Activated CD4-positive, alpha-beta memory T cell treated with anti-CD3 and anti-CD28 coated beads for 36 hours (primary cell): ENCODE measurements at regions of chr13 and their contacts with region 1.

Region 1: DNA sequence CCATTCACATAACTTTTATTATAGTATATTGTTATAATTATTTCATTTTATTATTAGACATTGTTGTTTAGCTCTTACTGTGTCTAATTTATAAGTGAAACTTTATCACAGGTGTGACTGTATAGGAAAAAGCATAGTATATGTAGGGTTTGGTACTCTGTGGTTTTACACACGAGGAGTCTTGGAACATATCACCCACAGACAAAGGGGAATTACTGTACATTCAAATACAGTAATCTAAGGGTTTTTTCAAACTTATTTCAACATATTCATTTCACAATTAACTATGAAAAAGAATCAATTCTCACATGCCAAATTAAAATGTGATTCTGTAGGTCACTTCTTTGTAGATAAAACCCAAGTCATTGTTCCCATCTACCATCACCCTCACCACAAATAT is 46.0 kb downstream of the RBM26 start:
- DNase-seq: no peak
- H3K4me3 Mint-ChIP-seq: no peak overlapping the region
- H3K27ac Mint-ChIP-seq: no peak overlapping the region
- H3K4me1 Mint-ChIP-seq: peaks cover 20% of the 10 kb centered on the region
- H3K27me3 Mint-ChIP-seq: no peaks in the 10 kb centered on the region

Region 2: DNA sequence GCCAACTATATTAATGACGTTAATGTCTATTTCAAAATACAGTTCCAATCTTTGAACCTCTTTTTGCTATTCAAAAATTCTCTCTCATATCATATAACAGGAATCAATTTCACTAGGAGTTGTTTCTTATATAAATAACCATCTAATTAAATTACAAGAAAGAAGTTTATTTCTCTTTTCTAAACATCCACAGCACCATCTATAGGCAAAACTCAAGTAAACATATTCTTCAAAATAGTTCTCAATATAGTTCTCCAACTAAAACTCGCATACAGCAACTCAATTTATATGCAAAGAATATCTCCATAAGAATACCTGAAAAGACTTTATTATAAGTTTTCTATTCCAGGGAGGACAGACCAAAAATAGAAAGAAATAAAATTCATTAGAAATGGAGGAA is 19.6 kb before region 1 on chr13:
- CTCF ChIA-PET with region 1: no interaction called
- POLR2A ChIA-PET with region 1: no interaction called
- intact Hi-C with region 1: loop called (anchors 2 kb)
- DNase-seq: no peak
- H3K4me3 Mint-ChIP-seq: no peak overlapping the region
- H3K27ac Mint-ChIP-seq: no peak overlapping the region
- H3K4me1 Mint-ChIP-seq: peaks cover 3% of the 10 kb centered on the region
- H3K27me3 Mint-ChIP-seq: no peaks in the 10 kb centered on the region

Region 3: DNA sequence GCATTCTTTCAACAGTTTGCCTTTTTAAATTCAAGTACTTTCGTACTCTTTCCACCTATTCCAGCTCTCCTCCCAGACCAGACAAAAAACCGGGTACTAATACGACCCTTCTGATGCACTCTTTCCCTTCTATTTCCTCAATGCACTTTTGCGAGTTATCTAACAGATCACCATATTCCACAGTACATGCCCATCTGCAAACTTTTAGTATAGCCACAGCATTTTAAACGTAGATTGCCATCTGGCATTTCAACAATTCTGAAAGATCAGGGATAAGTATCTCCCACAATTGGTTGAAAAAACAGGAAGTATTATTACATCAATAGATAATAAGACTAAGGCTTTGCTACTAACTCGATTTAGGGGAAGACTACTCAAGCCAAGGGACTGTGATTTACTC is 14.5 kb after region 1 on chr13:
- CTCF ChIA-PET with region 1: no interaction called
- POLR2A ChIA-PET with region 1: no interaction called
- intact Hi-C with region 1: loop called (anchors 2 kb)
- DNase-seq: no peak
- H3K4me3 Mint-ChIP-seq: no peak overlapping the region
- H3K27ac Mint-ChIP-seq: no peak overlapping the region
- H3K4me1 Mint-ChIP-seq: peaks cover 5% of the 10 kb centered on the region
- H3K27me3 Mint-ChIP-seq: no peaks in the 10 kb centered on the region